Keratinocyte (primary cell): ENCODE measurements at regions of chr6 and their contacts with region 1.

Region 1: GRCh38 chr6:13496513-13497180 is 9.2 kb upstream of the GFOD1 start:
- DNase-seq: no peak
- H3K4me3 ChIP-seq: no peak overlapping the region
- H3K27ac ChIP-seq: no peak overlapping the region
- H3K4me1 ChIP-seq: peaks cover 9% of the 10 kb centered on the region
- H3K27me3 ChIP-seq: no peaks in the 10 kb centered on the region
- CTCF ChIP-seq: no peak

Region 2: DNA sequence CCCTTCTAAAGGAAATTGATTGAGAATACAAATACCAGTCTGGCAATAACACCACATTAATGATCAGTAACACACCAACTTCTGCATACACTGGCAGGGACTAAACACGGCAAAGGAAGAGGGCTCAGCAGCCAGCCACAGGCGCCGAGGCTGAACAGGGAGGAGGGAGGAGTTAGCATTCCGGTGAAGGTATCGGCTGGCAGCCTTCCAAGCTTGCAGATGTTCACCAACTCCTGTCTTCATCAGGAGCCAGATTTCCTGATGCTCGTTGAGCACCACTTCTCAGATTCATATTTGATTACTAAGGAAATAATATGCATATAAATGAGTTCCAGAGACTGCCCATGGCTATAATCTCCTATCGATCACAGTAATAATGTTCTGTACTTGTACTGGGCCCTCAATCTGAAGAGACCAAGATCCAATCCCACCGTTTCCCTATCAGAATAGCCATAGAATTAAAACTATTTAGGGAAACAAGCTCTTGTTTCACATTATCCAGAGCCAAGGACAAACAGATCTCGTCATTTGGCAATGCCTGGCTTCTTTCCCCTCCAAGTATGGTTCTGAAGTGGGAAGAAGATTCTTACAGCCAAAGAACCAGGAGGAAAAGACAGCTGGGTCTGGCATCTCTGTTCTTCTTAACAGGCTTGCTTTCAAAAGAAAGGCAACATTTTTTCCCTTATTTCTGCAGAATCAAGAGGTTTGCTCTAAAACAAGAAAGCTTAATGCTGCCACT is 51.5 kb before region 1 on chr6:
- dilution Hi-C with region 1: no loop called
- DNase-seq: peak; percentile 56
- H3K4me3 ChIP-seq: no peak overlapping the region
- H3K27ac ChIP-seq: no peak overlapping the region
- H3K4me1 ChIP-seq: peaks cover 20% of the 10 kb centered on the region
- H3K27me3 ChIP-seq: no peaks in the 10 kb centered on the region
- CTCF ChIP-seq: no peak

Region 3: GRCh38 chr6:13561624-13562267 is 65.1 kb after region 1 on chr6:
- dilution Hi-C with region 1: loop called (anchors 5 kb)
- DNase-seq: no peak
- H3K4me3 ChIP-seq: no peak overlapping the region
- H3K27ac ChIP-seq: no peak overlapping the region
- H3K4me1 ChIP-seq: peaks cover 10% of the 10 kb centered on the region
- H3K27me3 ChIP-seq: no peaks in the 10 kb centered on the region
- CTCF ChIP-seq: no peak